Left cardiac atrium (tissue), 4 donors: ENCODE measurements at regions of chr7 and their contacts with region 1.

Region 1: DNA sequence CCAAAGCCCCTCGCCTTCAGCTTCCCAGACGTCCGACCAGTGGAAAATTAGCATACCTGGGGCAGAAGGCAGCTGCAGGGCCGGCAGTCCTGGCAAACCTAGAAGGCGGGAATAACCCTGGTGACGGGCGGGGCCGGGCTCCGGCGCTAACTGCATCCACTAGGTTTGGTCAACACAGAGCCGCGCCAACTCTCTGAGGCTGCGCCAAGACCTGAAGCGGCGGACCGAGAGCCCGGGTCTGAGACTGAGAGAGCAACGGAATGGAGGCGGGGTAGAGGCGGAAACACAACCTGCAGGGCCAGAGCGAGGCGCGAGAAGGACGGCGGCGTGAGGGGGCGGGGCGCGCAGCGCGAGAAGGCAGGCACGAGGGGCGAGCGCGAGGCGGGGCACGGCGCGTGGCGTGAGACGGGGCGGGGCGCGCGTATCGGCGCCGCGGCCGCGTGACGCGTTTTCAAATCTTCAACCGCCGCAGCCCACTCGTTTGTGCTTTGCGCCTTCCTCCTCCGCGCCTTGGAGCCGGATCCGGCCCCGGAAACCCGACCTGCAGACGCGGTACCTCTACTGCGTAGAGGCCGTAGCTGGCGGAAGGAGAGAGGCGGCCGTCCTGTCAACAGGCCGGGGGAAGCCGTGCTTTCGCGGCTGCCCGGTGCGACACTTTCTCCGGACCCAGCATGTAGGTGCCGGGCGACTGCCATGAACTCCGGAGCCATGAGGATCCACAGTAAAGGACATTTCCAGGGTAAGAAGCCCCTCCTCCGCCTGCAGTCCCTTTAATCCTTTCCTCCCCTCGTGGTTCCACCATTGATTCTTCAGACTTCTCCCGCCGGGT is at the starts of genes DBF4 and SLC25A40:
- DNase-seq: peak; percentile 97
- ATAC-seq: peak; percentile 98 to 99
- total RNA-seq, gene DBF4: 3.1 to 5.3 TPM
- total RNA-seq, gene SLC25A40: 25.1 to 31.4 TPM

Region 2: DNA sequence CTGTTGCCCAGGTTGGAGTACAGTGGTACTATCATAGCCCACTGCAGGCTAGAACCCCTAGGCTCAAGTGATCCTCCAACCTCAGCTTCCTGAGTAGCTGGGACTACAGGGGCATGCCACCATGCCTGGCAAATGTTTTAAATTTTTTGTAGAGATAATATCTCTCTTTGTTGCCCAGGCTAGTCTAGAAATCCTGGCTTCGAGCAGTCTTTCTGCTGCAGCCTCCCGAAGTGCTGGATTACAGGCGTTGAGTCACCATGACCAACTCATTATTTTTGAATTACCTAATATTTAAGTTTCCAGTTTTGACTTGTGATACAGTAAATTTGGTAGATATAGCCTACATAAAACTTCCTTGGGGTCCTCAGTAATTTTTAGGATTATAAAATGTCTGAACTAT is 173.9 kb before region 1 on chr7:
- intact Hi-C with region 1: no loop called
- DNase-seq: no peak
- ATAC-seq: no peak

Region 3: DNA sequence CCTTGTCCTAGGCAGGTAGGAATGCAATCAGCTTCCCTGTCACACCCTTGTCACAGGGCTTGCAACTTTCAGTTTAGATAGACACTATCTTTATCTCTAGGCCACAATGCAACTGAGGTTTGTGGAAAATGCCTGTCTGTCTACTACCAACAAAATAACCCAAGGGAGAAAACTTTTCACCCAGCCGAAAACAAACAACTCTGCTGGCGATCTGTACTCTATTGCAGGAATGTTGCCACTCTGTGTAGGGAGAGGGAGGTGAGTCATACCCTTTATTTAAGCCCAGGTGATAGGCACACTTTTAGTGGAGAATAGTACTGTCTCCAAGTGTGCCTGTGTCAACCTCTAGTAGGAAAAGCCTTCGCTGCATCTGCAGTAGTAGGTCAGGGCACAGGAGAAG is 108.5 kb before region 1 on chr7:
- intact Hi-C with region 1: no loop called
- DNase-seq: no peak
- ATAC-seq: no peak

Region 4: DNA sequence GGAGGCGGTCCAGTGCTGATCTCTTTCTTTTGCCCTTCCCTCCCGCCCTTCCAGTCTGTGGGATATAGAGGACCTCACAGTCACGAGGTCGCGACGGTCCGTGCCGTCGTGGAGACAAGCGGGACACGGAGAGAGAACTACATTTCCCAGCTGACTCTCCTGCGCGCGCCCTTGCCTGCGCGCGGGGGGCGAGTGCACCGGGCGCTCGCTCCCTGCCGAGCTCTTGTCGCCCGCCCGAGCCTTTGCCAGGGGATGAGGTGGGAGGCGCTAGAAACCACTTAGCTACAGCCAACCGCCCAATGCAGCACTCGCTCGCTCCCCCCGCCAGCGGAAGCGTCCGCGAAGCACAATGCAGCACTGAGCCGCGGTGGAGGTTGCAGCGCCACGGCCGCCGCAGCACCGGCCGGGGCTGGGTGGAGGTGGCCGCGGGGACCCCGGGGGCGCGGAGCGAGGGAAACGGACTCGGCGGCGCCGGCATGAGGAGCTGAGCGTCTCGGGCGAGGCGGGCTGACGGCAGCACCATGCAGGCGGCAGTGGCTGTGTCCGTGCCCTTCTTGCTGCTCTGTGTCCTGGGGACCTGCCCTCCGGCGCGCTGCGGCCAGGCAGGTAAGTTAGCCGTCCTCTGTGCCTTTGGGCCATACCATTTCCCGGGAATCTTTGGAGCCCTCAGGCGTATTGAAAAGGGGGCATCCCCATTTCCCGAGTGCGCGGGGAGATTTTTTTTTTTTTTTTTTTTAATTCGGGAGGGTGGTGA is 57.9 kb after region 1 on chr7 and contains the start of gene ADAM22:
- intact Hi-C with region 1: loop called in 1 of 2 experiments (anchors 10 kb)
- DNase-seq: peak; percentile 84
- ATAC-seq: peak; percentile 98 to 99
- total RNA-seq, gene ADAM22: 3.1 to 4.3 TPM

Region 5: DNA sequence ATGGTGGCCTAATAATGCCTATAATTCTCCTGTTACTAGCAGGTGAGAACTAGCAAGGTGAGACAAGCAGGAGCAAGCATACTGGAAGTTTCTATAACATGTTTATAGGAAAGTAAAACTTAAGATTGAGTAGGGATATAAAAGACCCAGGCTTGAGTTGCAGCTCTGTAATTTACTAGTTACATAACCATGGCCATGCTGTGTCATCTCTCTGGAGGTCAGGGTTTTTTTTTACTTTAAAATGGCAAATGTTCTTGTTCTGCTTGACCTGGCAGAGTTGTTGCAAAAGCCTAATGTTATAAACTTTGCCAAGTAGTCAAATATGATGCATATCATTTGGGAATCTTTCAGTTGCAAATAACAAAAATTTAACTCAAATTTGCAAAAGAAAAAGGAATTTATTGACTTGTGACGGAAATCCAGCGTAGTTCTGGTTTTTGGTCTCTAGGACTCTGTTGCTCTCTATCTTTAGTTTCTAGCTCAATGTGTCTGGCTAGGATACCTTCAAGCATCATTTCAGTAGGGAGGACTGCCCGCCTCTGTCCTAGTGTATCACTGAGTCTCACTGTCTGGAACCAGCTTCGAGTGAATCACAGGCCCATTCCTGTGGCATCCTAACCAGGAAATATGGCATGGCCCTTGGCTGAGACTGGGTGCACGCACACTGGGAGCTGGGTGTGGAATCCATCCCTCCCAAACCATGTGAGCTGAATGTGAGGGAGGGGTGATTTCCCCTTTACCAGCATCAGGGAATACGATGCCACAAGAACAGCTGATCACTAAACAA is 125.7 kb after region 1 on chr7:
- intact Hi-C with region 1: no loop called
- DNase-seq: no peak
- ATAC-seq: peak in 1 of 2 donors; percentile 63

Region 6: DNA sequence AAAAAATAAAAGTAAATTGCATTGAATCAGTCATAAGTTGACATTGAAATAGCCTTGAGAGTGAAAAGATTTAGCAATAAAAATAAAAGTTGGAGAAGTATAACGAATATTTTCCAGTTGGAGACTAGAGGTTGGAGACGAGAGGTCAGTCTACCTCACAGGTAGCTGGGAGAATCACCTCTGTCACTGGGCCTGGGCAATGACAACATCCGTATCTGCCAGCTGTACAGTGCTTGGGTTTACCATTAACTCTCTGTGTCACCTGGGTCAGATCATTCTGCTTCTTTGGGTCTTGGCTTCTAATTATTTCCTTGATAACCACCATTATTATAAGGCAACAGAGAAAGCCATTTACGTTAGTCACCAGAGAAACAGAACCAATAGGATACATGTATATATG is 492.4 kb after region 1 on chr7:
- intact Hi-C with region 1: no loop called
- DNase-seq: no peak
- ATAC-seq: no peak